ENCODE measurements at regions of chr19 and their contacts with region 1.

Region 1: DNA sequence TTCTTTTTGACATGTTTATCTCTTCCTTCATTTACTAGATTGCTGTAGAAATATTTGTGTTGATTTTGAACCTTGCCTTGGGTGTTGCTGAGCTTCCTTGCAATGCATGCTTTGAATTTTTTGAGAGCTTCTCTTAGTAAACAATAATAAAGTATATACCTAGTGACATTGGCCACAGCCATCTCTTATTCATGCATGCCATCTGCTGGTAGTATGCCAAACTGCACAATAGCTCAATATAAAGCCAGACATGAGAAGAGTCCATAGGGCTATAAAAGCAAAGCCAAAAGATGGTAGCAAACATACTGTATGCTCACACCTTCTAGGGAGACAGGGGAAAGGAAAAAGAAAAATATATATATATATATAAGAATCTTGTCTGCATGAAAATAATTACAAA is 18.9 kb upstream of the ZSCAN5A start:
- DNase-seq: no peak
- ATAC-seq: peak; percentile 86
- H3K4me3 ChIP-seq: no peak overlapping the region
- H3K27ac ChIP-seq: no peak overlapping the region
- H3K4me1 ChIP-seq: no peaks in the 10 kb centered on the region
- H3K27me3 ChIP-seq: no peaks in the 10 kb centered on the region
- CTCF ChIP-seq: peak; percentile 65 to 81 (median 69); a peak in 5 of 6 replicates
- EP300 ChIP-seq: no peak
- POLR2A ChIP-seq: no peak
- RAD21 ChIP-seq: peak; percentile 94

Region 2: GRCh38 chr19:56066152-56067023 is 267.1 kb before region 1 on chr19:
- CTCF ChIA-PET with region 1: interaction called, 63 read pairs
- POLR2A ChIA-PET with region 1: no interaction called
- RAD21 ChIA-PET with region 1: interaction called, 30 read pairs
- SMC1A ChIA-PET with region 1: interaction called, 15 read pairs
- in situ Hi-C with region 1: no loop called
- intact Hi-C with region 1: loop called (anchors 2 kb)
- DNase-seq: no peak
- ATAC-seq: peak; percentile 87
- H3K4me3 ChIP-seq: peak overlapping the region; percentile 24; the same call in 1 of the 2 replicates
- H3K27ac ChIP-seq: no peak overlapping the region
- H3K4me1 ChIP-seq: no peaks in the 10 kb centered on the region
- H3K27me3 ChIP-seq: no peaks in the 10 kb centered on the region
- CTCF ChIP-seq: peak; percentile 85 to 94 (median 88)
- EP300 ChIP-seq: no peak
- POLR2A ChIP-seq: no peak
- RAD21 ChIP-seq: peak; percentile 71

Region 3: DNA sequence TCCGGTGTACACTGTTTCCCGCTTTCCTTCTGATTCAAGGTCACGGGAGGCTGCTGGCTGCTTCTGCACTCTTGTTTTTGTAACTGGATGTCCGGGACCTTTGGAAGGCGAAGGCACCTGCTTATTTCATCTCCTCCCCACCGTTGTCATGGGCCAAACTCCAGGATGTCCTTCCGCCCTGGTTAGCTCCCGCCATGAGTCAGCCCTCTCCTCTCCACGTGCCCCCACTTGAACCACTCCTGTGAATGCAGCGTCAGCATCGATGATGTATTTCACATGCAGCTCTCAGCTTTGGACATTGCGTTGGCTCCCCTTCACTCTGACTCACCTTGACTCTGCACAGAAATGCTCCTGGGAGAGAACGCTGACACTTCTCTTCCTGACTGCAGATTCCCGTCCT is 163.2 kb before region 1 on chr19:
- CTCF ChIA-PET with region 1: interaction called, 7 read pairs
- POLR2A ChIA-PET with region 1: no interaction called
- RAD21 ChIA-PET with region 1: no interaction called
- SMC1A ChIA-PET with region 1: interaction called, 3 read pairs
- in situ Hi-C with region 1: no loop called
- intact Hi-C with region 1: loop called (anchors 5 kb)
- DNase-seq: no peak
- ATAC-seq: no peak
- H3K4me3 ChIP-seq: no peak overlapping the region
- H3K27ac ChIP-seq: no peak overlapping the region
- H3K4me1 ChIP-seq: no peaks in the 10 kb centered on the region
- H3K27me3 ChIP-seq: no peaks in the 10 kb centered on the region; a peak in 1 of 4 replicates
- CTCF ChIP-seq: no peak
- EP300 ChIP-seq: no peak
- POLR2A ChIP-seq: no peak
- RAD21 ChIP-seq: no peak

Region 4: DNA sequence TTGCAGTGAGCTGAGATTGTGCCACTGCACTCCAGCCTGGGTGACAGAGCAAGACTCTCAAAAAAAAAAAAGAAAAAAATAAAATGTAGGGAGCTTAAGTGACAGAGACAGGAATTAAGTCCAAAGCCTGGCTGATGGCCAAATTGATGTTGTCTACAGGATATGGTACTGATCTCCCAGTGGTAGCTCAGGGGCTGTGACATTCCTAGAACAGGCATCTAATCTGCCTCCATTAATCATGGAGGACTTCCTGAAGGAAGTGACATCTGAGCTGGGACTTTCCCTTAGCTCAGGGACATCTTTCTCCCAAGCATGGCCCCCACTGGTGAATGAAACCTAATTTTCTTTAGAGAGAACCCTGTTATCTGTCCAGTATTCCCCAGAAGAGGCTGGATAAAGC is 72.4 kb before region 1 on chr19:
- CTCF ChIA-PET with region 1: interaction called, 185 read pairs
- POLR2A ChIA-PET with region 1: no interaction called
- RAD21 ChIA-PET with region 1: interaction called, 106 read pairs
- SMC1A ChIA-PET with region 1: interaction called, 82 read pairs
- in situ Hi-C with region 1: no loop called
- intact Hi-C with region 1: no loop called
- DNase-seq: no peak
- ATAC-seq: no peak
- H3K4me3 ChIP-seq: no peak overlapping the region
- H3K27ac ChIP-seq: no peak overlapping the region
- H3K4me1 ChIP-seq: no peaks in the 10 kb centered on the region
- H3K27me3 ChIP-seq: no peaks in the 10 kb centered on the region
- CTCF ChIP-seq: no peak
- EP300 ChIP-seq: no peak
- POLR2A ChIP-seq: no peak
- RAD21 ChIP-seq: no peak

Region 5: DNA sequence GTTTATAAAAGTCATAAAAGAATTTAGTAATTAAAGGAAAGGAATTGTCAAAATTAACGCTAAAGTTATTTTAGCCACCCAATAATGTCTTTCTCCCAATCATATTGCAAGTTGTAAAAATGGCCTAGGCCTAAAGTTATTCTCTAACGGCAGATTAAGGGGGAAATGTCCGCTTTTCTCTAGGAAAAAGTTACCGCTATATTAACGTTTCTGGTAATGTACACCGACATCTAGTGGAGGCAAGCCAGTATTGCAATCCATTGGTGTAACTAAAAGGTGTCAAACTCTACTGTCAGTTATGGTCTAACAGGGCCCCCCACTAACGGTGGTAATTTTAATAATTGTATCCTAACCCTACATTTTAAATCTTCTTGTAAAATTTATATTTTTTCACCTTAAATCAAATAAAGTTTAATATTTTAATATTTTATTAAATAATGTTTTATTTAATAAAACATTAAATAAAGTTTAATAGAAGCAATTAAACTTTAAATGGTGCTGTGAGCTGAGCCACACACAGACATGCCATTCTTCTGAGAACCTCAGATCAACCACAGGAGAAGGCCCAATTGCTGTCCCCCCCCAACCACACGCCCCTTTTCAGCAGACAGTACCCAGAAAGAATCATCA is 17.0 kb after region 1 on chr19:
- CTCF ChIA-PET with region 1: interaction called, 22 read pairs
- POLR2A ChIA-PET with region 1: no interaction called
- RAD21 ChIA-PET with region 1: interaction called, 11 read pairs
- SMC1A ChIA-PET with region 1: interaction called, 11 read pairs
- in situ Hi-C with region 1: no loop called
- intact Hi-C with region 1: no loop called
- DNase-seq: peak; percentile 11
- ATAC-seq: peak; percentile 48; the same call in 2 of the 3 replicates
- H3K4me3 ChIP-seq: no peak overlapping the region
- H3K27ac ChIP-seq: no peak overlapping the region
- H3K4me1 ChIP-seq: no peaks in the 10 kb centered on the region
- H3K27me3 ChIP-seq: no peaks in the 10 kb centered on the region
- CTCF ChIP-seq: peak; percentile 74 to 84 (median 78); a peak in 5 of 6 replicates
- EP300 ChIP-seq: no peak
- POLR2A ChIP-seq: no peak
- RAD21 ChIP-seq: peak; percentile 53

Region 6: GRCh38 chr19:56491399-56491798 is 157.9 kb after region 1 on chr19:
- CTCF ChIA-PET with region 1: no interaction called
- POLR2A ChIA-PET with region 1: no interaction called
- RAD21 ChIA-PET with region 1: no interaction called
- SMC1A ChIA-PET with region 1: no interaction called
- in situ Hi-C with region 1: no loop called
- intact Hi-C with region 1: no loop called
- DNase-seq: no peak
- ATAC-seq: no peak
- H3K4me3 ChIP-seq: no peak overlapping the region
- H3K27ac ChIP-seq: no peak overlapping the region
- H3K4me1 ChIP-seq: no peaks in the 10 kb centered on the region
- H3K27me3 ChIP-seq: no peaks in the 10 kb centered on the region
- CTCF ChIP-seq: no peak
- EP300 ChIP-seq: no peak
- POLR2A ChIP-seq: no peak
- RAD21 ChIP-seq: no peak

Measured in GM12878 (cell line).